Natural killer cell (primary cell): ENCODE measurements at regions of chr5 and their contacts with region 1.

Region 1: GRCh38 chr5:160199410-160199911 is 29.8 kb upstream of the FABP6 start:
- DNase-seq: peak; percentile 79 to 83
- ATAC-seq: peak; percentile 93 to 99 (median 99)
- H3K4me3 ChIP-seq: peak overlapping the region; percentile 25
- H3K4me3 Mint-ChIP-seq: peak overlapping the region; percentile 86
- H3K27ac ChIP-seq: no peak overlapping the region
- H3K27ac Mint-ChIP-seq: peak overlapping the region in 1 of 2 donors; percentile 74
- H3K4me1 ChIP-seq: peaks cover 12% of the 10 kb centered on the region
- H3K4me1 Mint-ChIP-seq: peaks cover 0 to 7% of the 10 kb centered on the region in 2 donors
- H3K27me3 ChIP-seq: peaks cover 5% of the 10 kb centered on the region
- H3K27me3 Mint-ChIP-seq: peaks cover 0 to 18% of the 10 kb centered on the region in 2 donors
- CTCF ChIP-seq: peak; percentile 91

Region 2: GRCh38 chr5:160021831-160022446 is 177.5 kb before region 1 on chr5:
- intact Hi-C with region 1: loop called (anchors 2 kb)
- DNase-seq: peak; percentile 33 to 85
- ATAC-seq: peak; percentile 91 to 98 (median 98)
- H3K4me3 ChIP-seq: no peak overlapping the region
- H3K4me3 Mint-ChIP-seq: no peak overlapping the region
- H3K27ac ChIP-seq: no peak overlapping the region
- H3K27ac Mint-ChIP-seq: peak overlapping the region; percentile 5 to 81
- H3K4me1 ChIP-seq: peaks cover 4% of the 10 kb centered on the region
- H3K4me1 Mint-ChIP-seq: peaks cover 20 to 31% of the 10 kb centered on the region in 2 donors
- H3K27me3 ChIP-seq: no peaks in the 10 kb centered on the region
- H3K27me3 Mint-ChIP-seq: no peaks in the 10 kb centered on the region
- CTCF ChIP-seq: peak; percentile 93

Region 3: GRCh38 chr5:160159991-160160792 is 39.3 kb before region 1 on chr5:
- intact Hi-C with region 1: no loop called
- DNase-seq: no peak
- ATAC-seq: peak in 2 of 3 donors; percentile 57 to 92
- H3K4me3 ChIP-seq: no peak overlapping the region
- H3K4me3 Mint-ChIP-seq: no peak overlapping the region
- H3K27ac ChIP-seq: no peak overlapping the region
- H3K27ac Mint-ChIP-seq: no peak overlapping the region
- H3K4me1 ChIP-seq: peaks cover 4% of the 10 kb centered on the region
- H3K4me1 Mint-ChIP-seq: peaks cover 7 to 8% of the 10 kb centered on the region in 2 donors
- H3K27me3 ChIP-seq: no peaks in the 10 kb centered on the region
- H3K27me3 Mint-ChIP-seq: peaks cover 6 to 9% of the 10 kb centered on the region in 2 donors
- CTCF ChIP-seq: no peak

Region 4: DNA sequence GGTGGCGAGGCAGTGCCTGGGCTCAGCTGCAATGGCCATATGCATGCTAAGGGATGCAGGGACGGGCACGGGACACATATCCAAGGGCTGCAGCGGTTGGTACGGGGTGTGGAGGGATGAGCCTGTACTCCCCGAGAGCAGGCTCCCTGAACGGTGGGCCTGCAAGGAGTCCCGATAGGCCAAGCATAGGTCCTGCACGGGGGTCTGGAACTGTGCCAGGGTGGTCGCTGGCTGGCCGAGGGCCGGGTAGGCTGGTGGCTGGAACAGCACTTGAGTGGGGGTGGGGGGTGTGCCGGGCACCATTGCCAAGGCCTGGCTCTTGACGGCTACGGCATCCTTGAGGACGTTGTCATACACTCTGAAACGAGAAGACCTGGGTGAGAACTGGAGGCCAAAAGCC is 54.0 kb after region 1 on chr5:
- intact Hi-C with region 1: no loop called
- DNase-seq: no peak
- ATAC-seq: no peak
- H3K4me3 ChIP-seq: no peak overlapping the region
- H3K4me3 Mint-ChIP-seq: no peak overlapping the region
- H3K27ac ChIP-seq: no peak overlapping the region
- H3K27ac Mint-ChIP-seq: no peak overlapping the region
- H3K4me1 ChIP-seq: no peaks in the 10 kb centered on the region
- H3K4me1 Mint-ChIP-seq: no peaks in the 10 kb centered on the region
- H3K27me3 ChIP-seq: no peaks in the 10 kb centered on the region
- H3K27me3 Mint-ChIP-seq: no peaks in the 10 kb centered on the region
- CTCF ChIP-seq: no peak

Region 5: GRCh38 chr5:160342403-160342941 is 143.0 kb after region 1 on chr5:
- intact Hi-C with region 1: loop called (anchors 1 kb)
- DNase-seq: no peak
- ATAC-seq: no peak
- H3K4me3 ChIP-seq: no peak overlapping the region
- H3K4me3 Mint-ChIP-seq: no peak overlapping the region
- H3K27ac ChIP-seq: no peak overlapping the region
- H3K27ac Mint-ChIP-seq: no peak overlapping the region
- H3K4me1 ChIP-seq: peaks cover 10% of the 10 kb centered on the region
- H3K4me1 Mint-ChIP-seq: peaks cover 0 to 6% of the 10 kb centered on the region in 2 donors
- H3K27me3 ChIP-seq: no peaks in the 10 kb centered on the region
- H3K27me3 Mint-ChIP-seq: no peaks in the 10 kb centered on the region
- CTCF ChIP-seq: no peak

Region 6: DNA sequence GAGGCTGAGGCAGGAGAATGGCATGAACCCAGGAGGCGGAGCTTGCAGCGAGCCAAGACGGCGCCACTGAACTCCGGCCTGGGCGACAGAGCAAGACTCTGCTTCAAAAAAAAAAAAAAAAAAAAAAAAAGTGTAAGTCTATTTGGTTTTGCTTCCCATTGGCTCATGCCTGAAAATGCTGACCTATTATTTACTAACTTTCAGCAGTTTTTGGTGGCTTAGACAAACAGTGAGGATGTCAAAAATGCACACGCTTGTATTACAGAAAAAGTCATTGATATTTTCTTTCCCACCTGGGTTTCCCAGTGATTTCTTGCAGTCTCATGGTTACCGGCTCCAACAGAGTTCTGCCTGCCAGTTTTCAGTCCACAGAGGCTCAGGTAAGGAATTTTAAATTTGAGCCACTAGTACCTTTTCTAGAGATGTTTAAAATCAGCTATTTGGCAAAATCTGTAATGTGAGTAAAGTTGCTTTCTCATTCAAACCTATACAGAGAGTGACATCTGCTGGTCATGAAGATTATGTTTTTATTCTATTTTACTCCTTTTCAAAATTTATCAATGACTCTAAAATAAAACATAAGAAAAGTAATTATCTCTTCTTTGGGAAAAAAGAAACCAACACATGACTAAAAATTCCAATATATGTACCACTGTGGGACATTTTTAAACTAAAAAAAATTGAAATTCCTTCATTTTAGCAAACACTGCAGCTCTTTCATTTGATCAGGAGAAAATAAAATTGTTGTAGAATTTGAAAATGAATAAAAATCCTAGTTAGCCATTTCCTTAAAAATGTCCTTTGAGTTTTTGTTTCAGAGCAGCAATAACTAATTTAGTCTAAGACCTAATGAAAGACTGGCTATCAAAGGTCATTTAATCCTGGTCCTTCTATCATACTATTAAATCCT is 191.6 kb after region 1 on chr5:
- intact Hi-C with region 1: loop called (anchors 1 kb)
- DNase-seq: peak in 1 of 2 donors; percentile 46
- ATAC-seq: no peak
- H3K4me3 ChIP-seq: no peak overlapping the region
- H3K4me3 Mint-ChIP-seq: no peak overlapping the region
- H3K27ac ChIP-seq: no peak overlapping the region
- H3K27ac Mint-ChIP-seq: no peak overlapping the region
- H3K4me1 ChIP-seq: no peaks in the 10 kb centered on the region
- H3K4me1 Mint-ChIP-seq: no peaks in the 10 kb centered on the region
- H3K27me3 ChIP-seq: no peaks in the 10 kb centered on the region
- H3K27me3 Mint-ChIP-seq: no peaks in the 10 kb centered on the region
- CTCF ChIP-seq: peak; percentile 50